Endothelial cell of umbilical vein (primary cell): ENCODE measurements at regions of chr7 and their contacts with region 1.

Region 1: GRCh38 chr7:142603870-142604448 is 145.3 kb upstream of the PRSS1 start:
- DNase-seq: peak; percentile 71
- H3K4me3 ChIP-seq: peak overlapping the region in 2 of 3 experiments; percentile 45 to 68
- H3K27ac ChIP-seq: no peak overlapping the region
- H3K4me1 ChIP-seq: peaks cover 7% of the 10 kb centered on the region
- H3K27me3 ChIP-seq: no peaks in the 10 kb centered on the region
- CTCF ChIP-seq: peak; percentile 67 to 75
- POLR2A ChIP-seq: no peak

Region 2: GRCh38 chr7:142516038-142516501 is 87.9 kb before region 1 on chr7:
- CTCF ChIA-PET with region 1: interaction called, 13 read pairs
- POLR2A ChIA-PET with region 1: no interaction called
- dilution Hi-C with region 1: no loop called
- intact Hi-C with region 1: no loop called
- DNase-seq: peak; percentile 65
- H3K4me3 ChIP-seq: no peak overlapping the region
- H3K27ac ChIP-seq: no peak overlapping the region
- H3K4me1 ChIP-seq: no peaks in the 10 kb centered on the region
- H3K27me3 ChIP-seq: peaks cover 9 to 13% of the 10 kb centered on the region in 2 experiments
- CTCF ChIP-seq: peak; percentile 75 to 79
- POLR2A ChIP-seq: no peak

Region 3: GRCh38 chr7:142568435-142569097 is 35.4 kb before region 1 on chr7:
- CTCF ChIA-PET with region 1: no interaction called
- POLR2A ChIA-PET with region 1: no interaction called
- dilution Hi-C with region 1: no loop called
- intact Hi-C with region 1: no loop called
- DNase-seq: peak; percentile 80
- H3K4me3 ChIP-seq: no peak overlapping the region
- H3K27ac ChIP-seq: peak overlapping the region; percentile 44
- H3K4me1 ChIP-seq: peaks cover 27% of the 10 kb centered on the region
- H3K27me3 ChIP-seq: no peaks in the 10 kb centered on the region
- CTCF ChIP-seq: no peak
- POLR2A ChIP-seq: peak; percentile 41

Region 4: DNA sequence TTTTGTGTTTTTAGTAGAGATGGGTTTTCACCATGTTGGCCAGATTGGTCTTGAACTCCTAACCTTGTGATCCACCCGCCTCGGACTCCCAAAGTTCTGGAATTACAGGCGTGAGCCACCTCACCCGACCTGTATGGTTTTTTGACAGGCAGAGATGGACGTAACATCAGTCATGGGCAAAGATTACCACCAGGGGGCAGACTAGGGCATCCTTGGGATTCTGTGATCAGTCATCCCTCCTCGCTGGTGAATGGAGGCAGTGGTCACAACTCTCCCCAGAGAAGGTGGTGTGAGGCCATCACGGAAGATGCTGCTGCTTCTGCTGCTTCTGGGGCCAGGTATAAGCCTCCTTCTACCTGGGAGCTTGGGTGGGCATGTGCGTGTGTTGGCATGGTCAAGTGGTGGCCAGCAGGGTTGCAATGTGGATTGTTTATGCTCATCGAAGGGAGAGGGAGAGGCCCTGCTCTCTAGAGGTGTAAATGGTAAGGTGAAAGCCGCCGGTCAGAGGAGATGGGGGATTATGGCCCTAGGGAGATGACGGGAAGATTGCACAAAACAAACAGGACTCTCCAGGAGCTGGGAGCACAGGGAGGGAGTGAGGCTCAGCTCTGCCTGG is 22.6 kb after region 1 on chr7:
- CTCF ChIA-PET with region 1: interaction called, 48 read pairs
- POLR2A ChIA-PET with region 1: no interaction called
- dilution Hi-C with region 1: no loop called
- intact Hi-C with region 1: no loop called
- DNase-seq: peak; percentile 45
- H3K4me3 ChIP-seq: no peak overlapping the region
- H3K27ac ChIP-seq: no peak overlapping the region
- H3K4me1 ChIP-seq: no peaks in the 10 kb centered on the region
- H3K27me3 ChIP-seq: no peaks in the 10 kb centered on the region
- CTCF ChIP-seq: peak; percentile 60 to 76
- POLR2A ChIP-seq: no peak

Region 5: GRCh38 chr7:142669074-142669654 is 65.2 kb after region 1 on chr7:
- CTCF ChIA-PET with region 1: interaction called, 5 read pairs
- POLR2A ChIA-PET with region 1: no interaction called
- dilution Hi-C with region 1: no loop called
- intact Hi-C with region 1: loop called (anchors 10 kb)
- DNase-seq: peak; percentile 53
- H3K4me3 ChIP-seq: no peak overlapping the region
- H3K27ac ChIP-seq: no peak overlapping the region
- H3K4me1 ChIP-seq: no peaks in the 10 kb centered on the region
- H3K27me3 ChIP-seq: peaks cover 2 to 4% of the 10 kb centered on the region in 2 experiments
- CTCF ChIP-seq: peak; percentile 8 to 27
- POLR2A ChIP-seq: no peak

Region 6: GRCh38 chr7:142817506-142817905 is 213.5 kb after region 1 on chr7:
- CTCF ChIA-PET with region 1: interaction called, 43 read pairs
- POLR2A ChIA-PET with region 1: no interaction called
- dilution Hi-C with region 1: no loop called
- intact Hi-C with region 1: no loop called
- DNase-seq: no peak
- H3K4me3 ChIP-seq: no peak overlapping the region
- H3K27ac ChIP-seq: no peak overlapping the region
- H3K4me1 ChIP-seq: peaks cover 3% of the 10 kb centered on the region
- H3K27me3 ChIP-seq: peaks cover 8 to 24% of the 10 kb centered on the region in 2 experiments
- CTCF ChIP-seq: no peak
- POLR2A ChIP-seq: no peak

Region 7: DNA sequence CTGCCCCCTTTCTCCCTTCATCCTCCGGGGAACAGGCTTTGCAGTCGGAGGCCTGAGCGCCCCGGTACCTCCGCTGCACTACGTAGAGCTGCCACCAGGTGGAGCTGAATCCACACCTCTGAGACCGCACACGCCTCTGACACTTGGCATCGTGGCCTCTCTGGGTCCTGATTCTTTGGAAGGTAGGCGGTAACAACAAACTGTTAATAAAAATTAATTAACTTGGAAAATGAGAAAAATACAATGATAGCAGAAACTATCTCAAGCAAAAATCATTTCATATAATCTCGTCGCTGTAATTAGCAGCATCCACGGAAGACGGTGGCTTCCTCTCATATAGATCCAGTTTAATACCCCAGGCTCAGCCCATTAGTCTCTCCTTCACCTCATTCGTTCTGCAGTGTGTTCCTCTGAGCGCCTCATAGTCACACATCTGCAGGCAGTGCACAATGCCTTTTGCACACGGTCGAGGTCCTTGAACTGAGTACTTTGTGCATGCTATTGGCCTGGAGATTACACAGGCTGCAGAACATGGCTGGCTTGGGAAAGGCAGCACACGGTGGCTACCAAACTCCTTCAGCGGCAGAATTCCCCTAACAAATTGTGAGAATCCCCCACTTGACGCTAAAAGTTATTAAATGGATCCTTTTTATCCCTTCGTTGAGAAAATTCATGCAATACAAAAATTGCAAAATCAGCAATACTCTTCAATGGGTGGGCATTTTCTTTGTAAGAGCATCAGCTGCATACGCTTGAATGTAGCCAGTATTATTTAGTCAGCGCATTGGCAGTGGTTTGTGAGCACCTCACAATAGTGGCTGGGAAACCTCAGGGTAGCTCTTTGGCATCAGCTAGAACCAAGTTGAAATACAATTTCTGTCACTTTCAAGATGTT is 404.3 kb after region 1 on chr7:
- CTCF ChIA-PET with region 1: interaction called, 30 read pairs
- POLR2A ChIA-PET with region 1: no interaction called
- dilution Hi-C with region 1: no loop called
- intact Hi-C with region 1: loop called (anchors 1 kb)
- DNase-seq: peak; percentile 62
- H3K4me3 ChIP-seq: no peak overlapping the region
- H3K27ac ChIP-seq: no peak overlapping the region
- H3K4me1 ChIP-seq: peaks cover under 1% of the 10 kb centered on the region
- H3K27me3 ChIP-seq: peaks cover 15 to 18% of the 10 kb centered on the region in 2 experiments
- CTCF ChIP-seq: peak; percentile 88 to 91
- POLR2A ChIP-seq: no peak